IMR-90 (cell line): ENCODE measurements at regions of chr9 and their contacts with region 1.

Region 1: DNA sequence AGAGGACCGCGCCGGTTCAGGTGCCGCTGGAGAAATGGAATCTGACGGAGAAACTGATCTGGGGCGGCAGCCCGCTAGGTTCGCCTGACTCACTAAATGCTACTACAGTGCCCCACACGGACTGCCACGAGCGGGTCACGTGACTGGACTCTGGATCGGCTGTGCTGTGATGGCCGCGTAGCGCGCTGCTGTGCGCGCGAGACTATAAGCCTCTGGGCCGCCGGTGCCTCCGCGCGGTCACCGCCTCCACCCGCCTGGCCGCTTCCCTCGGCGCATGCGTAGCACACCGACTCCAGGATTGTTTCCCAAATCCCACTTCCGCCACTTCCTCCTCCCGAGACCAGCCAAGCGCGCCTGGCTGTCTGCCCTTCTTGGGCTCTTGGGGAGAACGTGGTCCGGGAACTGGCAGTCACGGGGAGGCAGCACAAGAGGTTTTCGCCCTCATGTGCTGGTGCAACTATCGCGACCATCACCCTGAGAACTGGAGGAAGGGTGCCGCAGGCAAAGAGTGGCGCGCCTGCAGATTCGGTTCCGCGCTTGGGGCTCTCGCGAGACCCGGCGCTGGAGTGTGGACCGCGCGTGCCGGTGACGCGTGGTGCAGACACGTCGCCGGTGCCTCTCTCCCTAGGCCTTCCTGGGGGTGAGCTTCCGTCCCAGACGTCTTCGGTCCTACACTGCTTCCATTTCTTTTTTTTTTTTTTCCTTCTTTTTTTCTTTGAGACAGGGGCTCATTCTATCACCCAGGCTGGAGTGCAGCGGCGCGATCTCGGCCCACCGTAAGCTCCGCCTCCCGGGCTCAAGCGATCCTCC is 35.8 kb upstream of the GLDC start:
- DNase-seq: peak; percentile 98
- ATAC-seq: peak; percentile 97
- H3K4me3 ChIP-seq: peak overlapping the region; percentile 80
- H3K27ac ChIP-seq: peak overlapping the region; percentile 96
- H3K4me1 ChIP-seq: no peaks in the 10 kb centered on the region
- H3K27me3 ChIP-seq: no peaks in the 10 kb centered on the region
- CTCF ChIP-seq: no peak
- POLR2A ChIP-seq: peak; percentile 87
- RAD21 ChIP-seq: no peak

Region 2: GRCh38 chr9:6552033-6552432 is 129.3 kb before region 1 on chr9:
- CTCF ChIA-PET with region 1: no interaction called
- POLR2A ChIA-PET with region 1: no interaction called
- dilution Hi-C with region 1: no loop called
- in situ Hi-C with region 1: no loop called
- intact Hi-C with region 1: no loop called
- DNase-seq: peak; percentile 83
- ATAC-seq: peak; percentile 86
- H3K4me3 ChIP-seq: no peak overlapping the region
- H3K27ac ChIP-seq: peak overlapping the region; percentile 67
- H3K4me1 ChIP-seq: peaks cover 9% of the 10 kb centered on the region
- H3K27me3 ChIP-seq: no peaks in the 10 kb centered on the region
- CTCF ChIP-seq: peak; percentile 19; the same call in 1 of the 2 replicates
- POLR2A ChIP-seq: no peak
- RAD21 ChIP-seq: no peak

Region 3: DNA sequence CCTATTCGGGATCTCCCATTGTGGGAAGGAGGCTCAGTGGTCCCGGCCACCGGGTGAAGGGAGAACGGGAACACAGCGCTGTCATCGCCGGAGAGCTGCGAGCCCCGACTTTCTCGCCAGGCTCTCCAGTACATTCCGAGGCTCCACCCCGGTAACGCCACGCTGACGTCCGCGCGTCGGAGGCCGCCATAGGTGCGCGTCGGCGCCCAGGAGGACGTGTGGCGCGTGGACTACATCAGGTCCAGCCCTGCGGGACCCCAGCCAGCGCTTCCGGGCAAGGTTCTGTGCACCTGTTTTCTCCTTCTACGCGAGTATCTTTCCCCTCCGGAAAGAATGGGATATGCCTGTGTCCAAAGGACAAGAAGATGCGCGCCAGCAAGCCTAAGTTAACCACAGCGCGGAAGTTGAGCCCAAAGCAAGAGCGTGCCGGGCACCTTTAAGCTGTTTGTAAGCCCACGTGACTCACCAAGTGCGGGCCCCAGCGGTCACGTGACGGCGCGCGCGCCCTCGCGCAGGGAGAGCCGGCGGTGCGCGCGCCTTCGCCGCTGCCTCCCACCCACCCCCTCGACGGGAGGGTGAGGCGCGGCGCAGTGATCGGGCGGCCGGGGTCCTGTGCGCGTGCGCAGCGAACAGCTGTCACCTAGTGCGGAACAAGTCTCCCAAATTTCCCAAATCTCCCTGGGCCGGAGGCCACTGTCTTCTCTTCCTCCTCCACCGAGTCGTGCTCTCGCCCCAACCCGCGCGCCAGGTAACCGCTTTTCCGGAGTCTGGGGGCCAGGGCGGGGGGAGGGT is 76.3 kb after region 1 on chr9 and contains the start of gene KDM4C:
- CTCF ChIA-PET with region 1: no interaction called
- POLR2A ChIA-PET with region 1: interaction called, 4 read pairs
- dilution Hi-C with region 1: no loop called
- in situ Hi-C with region 1: loop called (anchors 10 kb)
- intact Hi-C with region 1: loop called (anchors 2 kb)
- DNase-seq: peak; percentile 93
- ATAC-seq: peak; percentile 90
- H3K4me3 ChIP-seq: peak within 1 kb of the TSS; percentile 57
- H3K27ac ChIP-seq: peak within 1 kb of the TSS; percentile 90
- H3K4me1 ChIP-seq: no peaks in the 10 kb centered on the region
- H3K27me3 ChIP-seq: no peaks in the 10 kb centered on the region
- CTCF ChIP-seq: no peak
- POLR2A ChIP-seq: peak; percentile 98
- RAD21 ChIP-seq: no peak
- total RNA-seq, gene KDM4C: 23.8 and 26.7 TPM in 2 replicates